ENCODE measurements at regions of chr10 and their contacts with region 1.

Region 1: DNA sequence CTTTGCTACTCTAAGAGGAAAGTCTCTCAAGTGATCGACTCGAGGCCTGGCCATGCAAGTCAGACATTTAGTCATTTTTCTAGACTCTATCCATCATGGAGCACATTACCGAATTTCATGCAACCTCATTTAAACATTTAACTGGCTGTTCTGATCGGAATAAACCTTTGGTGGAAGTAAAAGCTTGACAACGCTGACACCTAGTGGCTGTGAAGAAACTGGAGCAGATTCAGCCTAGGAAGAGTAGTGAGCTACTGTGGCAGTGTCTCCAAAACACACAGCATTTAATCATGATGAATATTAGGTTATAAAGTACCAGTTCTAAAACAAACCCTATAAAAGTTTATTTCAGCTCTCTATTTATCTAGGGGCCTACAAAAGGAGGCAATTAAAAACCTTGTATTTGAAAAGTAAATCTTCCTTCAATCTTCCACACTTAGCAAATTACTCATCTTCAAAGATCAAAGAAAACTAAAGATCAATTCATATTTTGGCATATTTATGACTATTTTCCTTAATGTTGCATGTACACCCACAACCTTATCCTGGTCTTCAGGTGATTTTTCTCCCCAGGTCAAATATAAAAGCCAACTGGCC is 175.0 kb downstream of the CTNNA3 start:
- DNase-seq: peak; percentile 42
- H3K4me3 ChIP-seq: no peak overlapping the region
- H3K27ac ChIP-seq: no peak overlapping the region
- H3K4me1 ChIP-seq: no peaks in the 10 kb centered on the region
- H3K27me3 ChIP-seq: no peaks in the 10 kb centered on the region
- CTCF ChIP-seq: peak; percentile 73 to 79

Region 2: DNA sequence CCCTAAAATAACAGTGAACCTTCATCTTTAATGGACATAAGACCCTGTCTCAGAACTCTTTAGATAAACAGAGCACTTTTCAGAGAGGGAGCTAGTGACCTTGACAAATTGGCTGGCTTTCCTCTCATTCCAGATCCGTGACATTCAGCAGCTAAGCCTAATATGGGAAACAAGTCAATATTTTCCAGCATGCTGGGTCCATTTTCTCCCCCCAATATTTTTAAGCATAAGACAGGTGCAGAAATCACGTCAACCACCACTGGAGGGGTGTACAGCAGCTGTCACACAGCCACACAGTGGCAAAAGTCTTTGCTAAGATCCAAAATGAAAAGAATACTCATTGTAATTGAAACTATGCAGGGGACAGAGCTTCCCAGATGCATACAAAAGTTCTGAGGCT is 569.1 kb before region 1 on chr10:
- CTCF ChIA-PET with region 1: no interaction called
- dilution Hi-C with region 1: no loop called
- in situ Hi-C with region 1: no loop called
- intact Hi-C with region 1: loop called (anchors 5 kb)
- DNase-seq: no peak
- H3K4me3 ChIP-seq: no peak overlapping the region
- H3K27ac ChIP-seq: no peak overlapping the region
- H3K4me1 ChIP-seq: no peaks in the 10 kb centered on the region
- H3K27me3 ChIP-seq: no peaks in the 10 kb centered on the region
- CTCF ChIP-seq: no peak

Region 3: DNA sequence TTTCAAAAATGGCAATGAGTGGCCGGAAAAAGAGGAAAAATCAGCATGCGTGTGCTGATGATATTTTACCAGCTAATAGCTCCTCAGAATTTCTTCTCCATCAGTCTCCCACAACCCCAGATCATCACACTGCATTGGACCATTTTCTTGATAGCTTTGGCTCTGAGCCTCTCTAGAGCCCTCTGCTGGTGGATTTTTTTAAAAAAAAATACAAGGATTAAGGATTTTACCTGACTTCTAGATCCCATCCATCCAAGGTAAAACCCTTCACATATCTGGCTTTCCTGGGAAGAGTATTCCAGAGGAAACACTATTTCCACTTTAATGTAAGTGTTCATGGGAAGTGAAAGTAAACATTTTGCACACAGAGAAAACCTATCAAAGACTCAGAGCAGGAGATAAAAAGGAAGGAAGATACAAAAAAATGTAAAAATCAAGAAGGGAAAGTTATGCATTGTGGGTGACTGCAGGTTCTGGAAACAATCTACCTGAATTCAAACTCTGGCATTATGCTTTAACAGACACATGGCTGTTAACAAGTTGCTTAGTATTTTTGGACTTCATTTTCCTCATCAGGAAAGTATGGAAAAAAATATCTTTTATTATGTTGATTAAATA is 214.3 kb before region 1 on chr10:
- CTCF ChIA-PET with region 1: no interaction called
- dilution Hi-C with region 1: no loop called
- in situ Hi-C with region 1: no loop called
- intact Hi-C with region 1: loop called (anchors 2 kb)
- DNase-seq: peak; percentile 0
- H3K4me3 ChIP-seq: no peak overlapping the region
- H3K27ac ChIP-seq: no peak overlapping the region
- H3K4me1 ChIP-seq: no peaks in the 10 kb centered on the region
- H3K27me3 ChIP-seq: no peaks in the 10 kb centered on the region
- CTCF ChIP-seq: peak; percentile 16 to 59